Dorsolateral prefrontal cortex (tissue), 120 donors: ENCODE measurements at regions of chr19 and their contacts with region 1.

Region 1: GRCh38 chr19:4815426-4816201 is 15.9 kb downstream of the TICAM1 start:
- DNase-seq: peak; percentile 81 to 96 (median 94)
- H3K4me3 ChIP-seq: peak overlapping the region; percentile 5 to 70 (median 46)
- H3K27ac ChIP-seq: peak overlapping the region in 39 of 59 donors; percentile 0 to 82 (median 53)
- H3K27me3 ChIP-seq: no peaks in the 10 kb centered on the region
- CTCF ChIP-seq: peak in 19 of 56 donors; percentile 9 to 59 (median 24)

Region 2: GRCh38 chr19:4759388-4760284 is 56.0 kb before region 1 on chr19:
- intact Hi-C with region 1: no loop called
- DNase-seq: peak; percentile 92 to 96 (median 94)
- H3K4me3 ChIP-seq: peak overlapping the region; percentile 33 to 75 (median 56)
- H3K27ac ChIP-seq: peak overlapping the region in 23 of 59 donors; percentile 1 to 71 (median 30)
- H3K27me3 ChIP-seq: peaks cover 0 to 2% (median 0%) of the 10 kb centered on the region in 45 donors
- CTCF ChIP-seq: no peak

Region 3: DNA sequence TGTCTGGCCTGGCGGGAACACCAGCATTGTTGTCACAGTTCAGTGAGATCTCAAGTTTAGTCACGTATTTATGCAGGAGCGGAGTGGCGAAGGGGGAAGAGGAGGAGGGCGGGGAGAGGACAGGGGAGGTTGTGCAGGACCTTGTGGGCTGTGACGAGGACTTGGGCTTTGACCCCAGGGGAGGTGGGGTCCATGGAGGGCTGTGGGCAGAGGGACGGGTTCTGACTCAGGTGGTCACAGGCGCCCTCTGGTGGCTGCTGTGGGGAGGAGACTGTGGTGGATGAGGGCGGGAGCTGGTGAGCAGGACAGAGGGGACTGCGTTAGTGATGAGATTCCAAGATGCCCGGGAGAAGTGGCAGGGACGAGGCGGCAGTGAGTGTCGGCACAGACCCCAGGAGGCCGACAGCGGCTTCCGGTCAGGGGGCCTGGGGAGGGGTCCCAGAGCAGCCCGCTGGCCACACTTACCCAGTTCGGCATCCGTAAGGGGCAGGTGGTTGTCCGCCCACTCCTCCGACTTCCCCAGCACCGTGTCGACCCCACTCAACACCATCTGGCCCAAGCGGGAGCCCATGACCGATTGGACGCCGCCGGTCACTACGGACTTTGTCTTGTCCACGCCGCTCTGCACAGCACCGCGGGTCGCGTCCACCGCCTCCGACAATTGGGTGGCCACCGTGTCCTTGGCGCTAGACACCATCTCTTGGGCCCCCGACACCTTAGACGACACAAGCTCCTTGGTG is 36.1 kb after region 1 on chr19:
- intact Hi-C with region 1: loop called (anchors 5 kb)
- DNase-seq: peak; percentile 57 to 82 (median 70)
- H3K4me3 ChIP-seq: peak overlapping the region in 2 of 59 donors; percentile 12 to 32
- H3K27ac ChIP-seq: peak overlapping the region in 10 of 59 donors; percentile 18 to 64 (median 43)
- H3K27me3 ChIP-seq: no peaks in the 10 kb centered on the region
- CTCF ChIP-seq: peak; percentile 57 to 94 (median 82)

Region 4: DNA sequence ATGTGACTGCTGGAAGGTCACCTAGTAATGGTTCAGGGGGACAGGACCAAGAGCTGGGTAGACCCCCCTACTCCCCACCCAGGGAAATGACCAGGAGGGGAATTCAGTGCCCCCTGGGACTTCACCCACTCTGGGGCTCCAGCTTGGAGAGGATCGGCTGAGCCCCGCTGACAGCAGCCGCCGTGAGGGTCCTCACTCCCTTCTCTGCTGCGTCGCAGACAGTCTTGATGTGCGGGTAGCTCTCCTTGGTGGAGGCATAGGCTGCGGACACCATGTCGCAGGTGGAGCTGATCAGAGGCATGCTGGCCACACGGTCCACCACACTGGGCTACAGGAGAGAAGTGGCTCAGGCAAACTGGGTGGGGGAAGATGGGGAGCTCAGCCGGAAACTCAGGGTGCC is 44.1 kb after region 1 on chr19:
- intact Hi-C with region 1: loop called (anchors 5 kb)
- DNase-seq: no peak
- H3K4me3 ChIP-seq: no peak overlapping the region
- H3K27ac ChIP-seq: peak overlapping the region in 4 of 59 donors; percentile 5 to 39 (median 20)
- H3K27me3 ChIP-seq: no peaks in the 10 kb centered on the region
- CTCF ChIP-seq: no peak

Region 5: DNA sequence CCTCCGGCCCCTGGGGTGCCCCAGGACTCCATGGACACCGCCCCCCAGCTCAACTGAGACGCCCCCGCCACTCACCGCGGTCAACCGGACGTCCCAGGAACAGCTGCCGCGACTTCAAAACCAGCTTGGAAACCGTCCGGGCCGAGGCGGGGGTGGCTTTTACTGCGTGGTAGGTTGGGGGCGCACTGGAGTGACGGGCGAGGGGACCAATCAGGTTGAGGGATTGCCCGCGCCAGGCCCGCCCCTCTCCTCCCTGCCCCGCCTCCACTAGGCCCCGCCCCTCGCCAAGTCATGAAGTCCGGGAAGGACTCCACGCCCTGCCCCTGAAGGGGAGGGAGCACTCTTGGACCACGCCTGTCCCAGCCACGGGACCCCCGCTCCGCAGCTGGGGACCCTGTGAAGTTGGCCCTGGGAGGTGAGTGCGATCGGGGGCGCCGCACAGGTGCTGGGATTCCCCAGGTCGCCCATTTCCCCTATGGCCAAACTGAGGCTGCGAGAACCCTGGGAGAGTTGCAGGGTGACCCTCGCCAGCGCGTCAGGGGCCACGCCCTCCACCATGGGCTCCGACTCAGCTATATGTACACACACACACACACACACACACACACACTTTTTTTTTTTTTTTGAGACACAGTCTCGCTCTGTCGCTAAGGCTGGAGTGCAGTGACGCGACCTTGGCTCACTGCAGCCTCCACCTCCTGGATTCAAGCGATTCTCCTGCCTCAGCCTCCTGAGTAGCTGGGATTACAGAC is 52.1 kb after region 1 on chr19 and contains the start of gene PLIN3:
- intact Hi-C with region 1: loop called in 1 of 2 experiments (anchors 5 kb)
- DNase-seq: peak; percentile 51 to 95 (median 92)
- H3K4me3 ChIP-seq: peak within 1 kb of the TSS; percentile 51 to 88 (median 76)
- H3K27ac ChIP-seq: peak within 1 kb of the TSS; percentile 11 to 94 (median 84)
- H3K27me3 ChIP-seq: peaks cover 0 to 8% (median 0%) of the 10 kb centered on the region in 45 donors
- CTCF ChIP-seq: peak in 9 of 56 donors; percentile 6 to 37 (median 12)
- total RNA-seq, gene PLIN3: 10.5 to 104 (median 28.0) TPM

Region 6: DNA sequence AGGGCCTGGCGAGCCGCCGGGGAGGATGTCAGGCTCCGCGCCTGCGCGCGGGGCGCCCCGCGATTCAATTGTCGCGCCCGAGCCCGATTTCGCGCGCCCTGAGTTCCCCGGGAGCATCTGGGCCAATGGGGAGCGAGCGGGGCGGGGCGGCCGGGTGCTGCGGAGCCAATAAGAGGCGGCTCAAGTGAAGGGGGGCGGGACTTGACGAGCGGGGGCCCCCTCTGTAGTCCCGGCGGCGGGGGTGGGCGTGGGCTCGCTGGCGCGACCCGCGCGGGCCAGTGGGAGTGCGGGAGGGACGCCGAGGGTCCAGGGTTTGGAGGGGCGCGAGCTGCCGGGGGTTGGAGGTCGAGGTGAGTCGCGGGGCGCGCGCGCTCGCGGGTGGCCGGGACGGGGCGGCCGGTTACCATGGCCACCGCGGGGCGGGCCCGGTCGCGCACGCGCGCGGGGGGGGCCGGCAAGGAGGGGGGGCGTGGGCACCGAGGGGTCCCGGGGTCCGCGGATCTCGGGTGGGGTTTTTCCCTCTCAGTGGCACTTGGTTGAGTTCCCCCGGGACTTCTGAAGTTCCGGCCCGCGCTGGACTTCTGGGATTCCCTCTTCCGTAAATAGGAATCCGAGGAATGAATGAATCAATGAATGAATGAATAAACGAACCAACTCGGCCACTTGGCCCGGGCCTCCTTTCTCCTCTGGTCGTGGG is 94.4 kb after region 1 on chr19:
- intact Hi-C with region 1: loop called (anchors 2 kb)
- DNase-seq: peak; percentile 88 to 95 (median 92)
- H3K4me3 ChIP-seq: peak overlapping the region; percentile 41 to 83 (median 71)
- H3K27ac ChIP-seq: peak overlapping the region in 50 of 59 donors; percentile 24 to 89 (median 74)
- H3K27me3 ChIP-seq: peaks cover 0 to 15% (median 0%) of the 10 kb centered on the region in 45 donors
- CTCF ChIP-seq: peak in 2 of 56 donors; percentile 4 to 28

Region 7: DNA sequence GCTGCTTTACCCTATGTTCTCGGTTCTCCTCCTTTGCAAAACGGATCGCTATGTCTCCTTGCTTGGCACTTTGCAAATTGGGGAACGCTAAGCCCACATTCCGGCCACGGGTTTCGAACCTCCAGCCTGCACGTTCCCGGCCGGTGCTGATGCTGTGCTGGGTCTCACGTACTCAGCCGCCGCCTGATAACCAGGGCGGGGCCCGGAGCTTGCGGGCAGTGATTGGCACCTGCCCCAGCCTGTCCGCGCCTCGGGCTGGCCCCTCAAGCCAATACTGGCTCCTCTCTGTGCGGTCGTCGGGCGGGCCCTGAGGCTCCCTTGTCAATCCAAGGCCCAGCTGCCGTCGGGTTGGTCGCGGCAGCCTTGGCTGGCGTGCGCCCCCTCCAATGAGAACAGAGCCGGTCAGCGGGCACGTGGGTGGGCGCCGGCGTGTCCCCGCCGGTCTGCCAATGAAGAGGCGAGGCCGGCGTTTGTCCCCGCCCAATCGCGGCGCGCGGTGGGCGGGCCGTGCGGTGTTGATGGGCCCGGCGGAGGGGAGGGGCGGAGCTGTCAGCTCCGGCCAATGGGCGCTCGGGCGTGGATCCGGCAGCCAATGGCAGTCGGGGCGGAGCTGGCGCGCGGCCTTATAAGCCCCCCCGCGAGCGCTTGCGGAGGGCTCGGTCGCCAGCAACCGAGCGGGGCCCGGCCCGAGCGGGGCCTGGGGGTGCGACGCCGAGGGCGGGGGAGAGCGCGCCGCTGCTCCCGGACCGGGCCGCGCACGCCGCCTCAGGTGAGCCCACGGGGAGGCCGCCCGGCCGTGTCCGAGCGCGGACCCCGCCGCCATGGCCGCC is 153.1 kb after region 1 on chr19 and contains the start of gene KDM4B:
- intact Hi-C with region 1: loop called in 1 of 2 experiments (anchors 5 kb)
- DNase-seq: peak; percentile 98 to 100 (median 99)
- H3K4me3 ChIP-seq: peak within 1 kb of the TSS; percentile 49 to 85 (median 72)
- H3K27ac ChIP-seq: peak within 1 kb of the TSS in 51 of 59 donors; percentile 30 to 89 (median 77)
- H3K27me3 ChIP-seq: no peaks in the 10 kb centered on the region
- CTCF ChIP-seq: peak in 9 of 56 donors; percentile 4 to 43 (median 16)
- total RNA-seq, gene KDM4B: 35.7 to 91.2 (median 55.2) TPM